Right ventricle myocardium inferior (tissue), 1 donor: ENCODE measurements at regions of chr2 and their contacts with region 1.

Region 1: DNA sequence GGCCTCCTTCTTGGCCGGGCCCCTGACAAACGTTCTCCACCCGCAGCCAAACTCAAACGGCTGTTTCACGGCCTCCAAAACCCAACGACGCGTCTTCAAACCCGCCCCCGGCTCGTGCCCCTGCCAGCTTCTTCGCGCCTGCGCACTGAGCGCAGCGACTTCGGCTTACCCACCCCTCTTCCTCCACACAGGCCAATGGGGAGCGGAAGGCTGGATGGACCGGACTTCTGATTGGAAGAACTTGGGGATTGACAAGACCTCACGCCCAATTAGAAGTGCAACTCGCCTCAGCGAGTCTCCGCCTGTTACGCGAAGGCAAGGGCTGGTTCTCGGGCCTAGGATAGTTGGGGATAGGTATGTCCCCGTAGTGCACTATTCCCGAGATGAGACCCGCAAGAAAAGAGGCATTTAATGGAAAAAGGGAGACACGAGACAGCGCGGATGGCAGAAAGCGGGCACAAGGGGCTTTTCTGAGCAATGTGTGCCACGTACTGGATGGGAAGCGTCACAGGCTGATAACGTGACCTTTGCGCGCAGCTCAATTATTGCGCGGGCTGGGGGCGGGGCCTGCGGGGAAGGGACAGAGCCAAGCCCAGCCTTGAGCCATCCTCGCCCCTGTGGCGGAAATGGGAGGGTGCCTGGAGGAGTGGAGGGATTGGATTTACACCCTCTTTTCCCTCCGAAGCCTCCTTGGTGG is at the start of gene LAPTM4A:
- DNase-seq: peak; percentile 99
- ATAC-seq: peak; percentile 97
- total RNA-seq, gene LAPTM4A: 242 TPM

Region 2: GRCh38 chr2:20015472-20016083 is 36.1 kb before region 1 on chr2:
- intact Hi-C with region 1: loop called (anchors 2 kb)
- DNase-seq: no peak
- ATAC-seq: peak; percentile 47

Region 3: GRCh38 chr2:20035955-20036666 is 15.6 kb before region 1 on chr2:
- intact Hi-C with region 1: loop called (anchors 2 kb)
- DNase-seq: no peak
- ATAC-seq: no peak

Region 4: DNA sequence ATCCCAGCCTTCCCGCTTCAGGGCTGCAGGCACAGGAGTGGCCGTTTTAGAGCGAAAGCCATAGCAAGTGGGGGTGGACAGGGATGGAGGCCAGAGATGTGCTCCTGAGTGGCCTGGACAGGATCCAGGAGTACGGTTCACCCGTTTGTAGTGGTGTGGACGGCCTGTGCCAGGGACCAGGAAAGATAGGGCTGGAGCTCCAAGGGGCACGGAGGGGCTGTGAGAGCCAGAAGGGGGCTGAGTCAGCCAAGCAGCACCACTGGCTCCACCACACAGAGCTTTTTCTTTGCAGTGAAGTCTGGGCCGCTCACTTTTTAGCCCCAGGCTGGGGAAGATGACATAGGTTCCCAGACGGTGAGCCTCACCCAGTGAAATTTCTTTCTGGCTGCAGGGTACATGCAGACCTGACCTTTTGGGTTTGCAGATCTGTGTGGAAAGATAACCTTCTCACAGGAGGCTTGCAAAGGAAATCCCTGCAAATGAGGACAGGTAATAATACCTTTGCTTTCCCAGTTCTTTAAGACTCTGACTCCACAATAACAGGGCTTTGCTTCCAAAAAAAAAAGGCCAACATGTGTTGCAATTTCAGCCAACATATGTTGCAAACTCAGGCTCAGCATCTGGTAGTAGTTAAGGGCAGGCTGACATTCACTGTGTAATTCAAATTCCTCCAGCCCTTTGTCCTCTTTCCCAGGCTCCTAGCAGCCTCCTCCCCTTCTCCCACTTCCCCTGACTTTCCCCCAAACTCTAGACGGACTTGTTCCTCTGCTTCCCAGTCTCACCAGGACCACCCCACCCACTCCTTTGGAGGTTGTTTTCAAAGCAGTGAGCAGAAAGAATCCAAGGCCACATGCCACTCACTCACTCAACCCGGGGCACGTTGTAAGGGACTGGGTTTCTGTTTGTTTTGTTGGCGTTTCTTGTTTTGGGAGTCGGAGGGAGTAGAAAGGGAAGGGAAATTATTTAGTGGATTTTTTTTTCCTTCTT is 20.0 kb after region 1 on chr2:
- intact Hi-C with region 1: loop called (anchors 2 kb)
- DNase-seq: peak; percentile 84
- ATAC-seq: peak; percentile 91

Region 5: GRCh38 chr2:20091305-20091991 is 39.8 kb after region 1 on chr2:
- intact Hi-C with region 1: loop called (anchors 2 kb)
- DNase-seq: peak; percentile 83
- ATAC-seq: peak; percentile 87

Region 6: GRCh38 chr2:20242060-20243006 is 190.7 kb after region 1 on chr2:
- intact Hi-C with region 1: no loop called
- DNase-seq: no peak
- ATAC-seq: peak; percentile 39

Region 7: GRCh38 chr2:20474757-20475566 is 423.3 kb after region 1 on chr2:
- intact Hi-C with region 1: no loop called
- DNase-seq: no peak
- ATAC-seq: peak; percentile 58